Left cardiac atrium (tissue), 4 donors: ENCODE measurements at regions of chr17 and their contacts with region 1.

Region 1: DNA sequence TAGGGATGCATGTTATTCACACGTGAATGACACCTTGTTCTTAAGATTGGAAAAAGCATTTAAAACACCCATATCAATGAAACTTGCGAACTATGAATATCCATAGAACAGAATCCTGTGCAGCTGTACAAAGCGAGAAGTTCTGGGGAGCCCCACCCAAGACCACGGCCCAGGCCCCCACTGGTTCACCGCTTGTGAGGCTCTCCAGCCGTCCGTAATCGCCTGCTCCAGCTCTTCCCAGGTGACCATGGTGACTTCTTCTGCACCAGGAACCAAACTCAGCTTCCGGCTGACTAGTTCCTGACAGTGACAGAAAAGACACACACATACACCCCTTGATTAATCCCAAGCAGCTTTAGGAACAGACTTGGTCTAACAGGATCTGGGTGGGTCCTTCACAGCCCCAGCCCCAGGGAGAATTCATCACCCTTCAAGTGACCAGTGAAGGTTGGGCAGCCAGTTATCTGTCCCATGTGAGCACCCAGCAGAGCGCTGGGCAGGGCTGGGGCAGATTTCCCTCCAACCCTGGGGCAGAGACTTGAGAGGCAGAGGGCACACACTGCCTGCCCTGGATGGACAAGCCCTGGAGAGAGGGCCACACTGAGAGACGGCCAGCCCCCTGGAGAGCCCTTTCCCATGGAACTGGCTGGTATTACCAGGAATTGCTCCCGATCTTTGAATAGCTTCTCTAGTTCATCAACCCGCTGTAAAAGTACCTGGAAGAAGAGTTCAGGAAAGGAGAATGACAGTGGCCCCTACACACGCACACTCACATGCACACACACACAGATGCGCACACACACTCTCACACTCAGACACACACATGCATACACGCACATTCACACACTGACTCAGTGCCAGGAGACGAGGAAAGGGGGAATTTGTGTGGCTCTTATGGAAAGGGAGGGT is 3.6 kb downstream of the QRICH2 start:
- DNase-seq: no peak
- ATAC-seq: no peak

Region 2: DNA sequence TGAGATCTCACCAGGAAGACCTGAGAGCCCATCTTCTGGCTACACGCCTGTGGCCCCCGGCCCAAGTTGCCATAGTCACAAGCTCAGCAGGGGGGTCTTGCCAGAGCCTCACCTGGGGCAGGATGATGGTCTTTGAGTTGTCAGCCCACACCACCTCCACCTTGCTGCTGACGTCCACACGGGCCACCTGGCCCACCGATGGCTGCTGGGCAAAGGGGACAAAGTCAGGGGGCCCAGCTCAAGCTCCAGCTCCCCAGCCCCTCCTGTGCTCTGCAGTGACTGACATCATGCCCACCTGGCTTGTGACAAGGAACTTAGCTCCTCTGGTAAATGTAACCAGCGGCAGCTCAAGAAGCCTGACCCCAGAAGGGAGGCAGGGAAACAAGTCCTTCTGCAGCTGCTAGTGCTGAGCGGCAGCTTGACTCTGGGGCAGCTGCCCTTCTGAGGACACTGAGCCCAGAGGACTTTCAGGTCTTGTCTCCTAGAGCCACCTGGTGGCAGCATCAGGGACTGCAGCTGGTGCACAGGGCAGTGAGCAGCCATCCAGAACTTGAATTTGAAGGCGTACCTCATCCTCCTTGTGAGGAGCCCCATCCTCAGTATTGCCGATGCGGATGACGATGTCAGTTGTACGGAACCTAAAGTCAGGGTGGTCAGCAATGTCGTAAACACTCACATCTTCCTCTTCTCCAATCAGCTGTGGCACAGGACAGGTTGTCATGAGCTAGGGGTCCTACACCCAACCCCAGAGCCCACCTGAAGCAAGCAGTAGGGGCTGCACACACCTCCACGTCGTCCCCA is 93.4 kb after region 1 on chr17:
- intact Hi-C with region 1: loop called (anchors 1 to 5 kb)
- DNase-seq: peak; percentile 90
- ATAC-seq: peak; percentile 79 to 80